ENCODE measurements at regions of chr5 and their contacts with region 1.

Region 1: DNA sequence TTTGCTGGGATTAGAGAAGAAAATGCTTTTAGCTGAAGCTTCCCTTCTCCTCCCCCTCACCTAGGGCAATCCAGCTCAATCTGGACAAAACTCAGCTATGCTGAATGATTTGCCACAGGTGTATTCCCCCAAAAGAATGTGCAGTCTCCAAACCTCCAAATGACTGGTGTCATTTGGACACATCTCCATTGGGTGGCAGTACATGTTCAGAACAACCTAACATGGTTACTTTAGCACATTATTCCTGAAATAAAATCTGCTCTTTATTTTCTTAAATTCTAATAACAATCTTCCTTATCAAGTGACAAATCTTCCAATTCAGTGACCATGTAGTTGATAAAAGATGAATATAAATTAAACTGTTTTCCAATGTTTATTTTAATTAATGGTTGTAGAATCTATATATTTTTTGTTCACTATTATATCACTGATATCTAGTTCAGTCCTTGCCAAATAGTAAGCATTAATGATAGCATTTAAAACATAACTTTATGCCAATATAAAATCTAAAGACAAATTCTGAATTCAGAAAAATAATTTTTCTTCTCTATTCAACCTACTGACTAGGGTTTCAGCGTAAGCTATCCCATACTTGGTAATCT is 61.3 kb upstream of the MOCS2 start:
- DNase-seq: peak; percentile 23
- H3K4me3 ChIP-seq: no peak overlapping the region
- H3K27ac ChIP-seq: no peak overlapping the region
- H3K4me1 ChIP-seq: no peaks in the 10 kb centered on the region
- CTCF ChIP-seq: peak; percentile 81

Region 2: DNA sequence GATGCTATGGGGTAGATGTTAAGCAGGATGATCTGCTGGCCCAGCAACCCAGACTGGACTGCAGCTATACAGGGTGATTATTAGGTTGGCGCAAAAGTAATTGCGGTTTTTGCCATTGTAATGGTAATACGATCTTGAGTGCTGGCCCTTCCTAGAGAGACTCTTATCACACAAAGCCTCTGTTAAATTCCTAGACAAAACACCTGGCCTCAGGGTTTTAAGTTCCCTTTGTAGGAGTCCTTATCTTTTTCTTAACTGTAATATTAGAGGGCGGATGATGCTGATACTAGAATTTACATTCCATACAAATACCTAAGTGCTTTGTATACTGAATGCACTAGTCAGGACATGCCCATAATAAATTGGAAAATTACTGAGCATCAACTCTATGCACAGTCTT is 611.8 kb after region 1 on chr5:
- CTCF ChIA-PET with region 1: no interaction called
- POLR2A ChIA-PET with region 1: no interaction called
- intact Hi-C with region 1: no loop called
- DNase-seq: no peak
- H3K4me3 ChIP-seq: no peak overlapping the region
- H3K27ac ChIP-seq: no peak overlapping the region
- H3K4me1 ChIP-seq: no peaks in the 10 kb centered on the region
- CTCF ChIP-seq: no peak

Region 3: DNA sequence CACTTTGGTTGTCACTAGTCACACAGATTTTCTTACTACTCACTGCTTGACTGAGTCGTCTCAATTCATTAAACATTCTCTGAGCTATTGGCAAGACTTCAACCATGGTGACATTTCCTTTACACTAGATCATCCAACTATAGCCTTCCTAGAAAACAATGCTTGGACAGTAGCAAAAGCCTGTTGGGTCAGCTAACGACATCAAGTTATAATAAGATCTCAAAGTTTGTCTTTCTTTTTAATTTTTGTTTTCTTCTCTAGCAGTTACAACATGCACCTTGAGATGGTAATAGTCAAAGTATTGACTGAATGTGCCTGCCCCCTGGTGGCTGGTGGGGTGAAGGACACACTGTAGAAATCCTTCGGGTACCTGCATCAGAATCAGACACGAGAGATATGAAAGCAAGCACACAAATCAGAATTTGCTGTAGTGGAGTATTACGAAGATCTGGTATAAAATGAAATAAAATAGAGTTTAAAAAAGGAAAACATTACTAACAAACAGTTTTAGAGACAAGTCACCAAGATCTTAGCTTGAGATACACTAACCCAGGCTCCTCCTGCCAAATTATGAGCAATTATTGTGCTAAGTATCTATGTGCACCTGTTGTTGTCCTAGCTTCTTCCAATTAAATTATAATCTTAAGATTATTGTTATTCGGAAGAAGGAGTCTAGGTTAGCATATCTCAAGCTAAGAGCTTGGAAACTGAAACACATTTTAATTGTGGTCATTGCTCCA is 1058.4 kb after region 1 on chr5:
- CTCF ChIA-PET with region 1: no interaction called
- POLR2A ChIA-PET with region 1: no interaction called
- intact Hi-C with region 1: loop called (anchors 5 kb)
- DNase-seq: peak; percentile 69
- H3K4me3 ChIP-seq: no peak overlapping the region
- H3K27ac ChIP-seq: no peak overlapping the region
- H3K4me1 ChIP-seq: peaks cover 6% of the 10 kb centered on the region
- CTCF ChIP-seq: peak; percentile 99

Measured in OCI-LY7 (cell line).